Activated CD8-positive, alpha-beta T cell treated with anti-CD3 and anti-CD28 coated beads, Interleukin-2, amount 10 ng/mL, durations not matched to agents 7 days and 5 days (primary cell): ENCODE measurements at regions of chr6 and their contacts with region 1.

Region 1: DNA sequence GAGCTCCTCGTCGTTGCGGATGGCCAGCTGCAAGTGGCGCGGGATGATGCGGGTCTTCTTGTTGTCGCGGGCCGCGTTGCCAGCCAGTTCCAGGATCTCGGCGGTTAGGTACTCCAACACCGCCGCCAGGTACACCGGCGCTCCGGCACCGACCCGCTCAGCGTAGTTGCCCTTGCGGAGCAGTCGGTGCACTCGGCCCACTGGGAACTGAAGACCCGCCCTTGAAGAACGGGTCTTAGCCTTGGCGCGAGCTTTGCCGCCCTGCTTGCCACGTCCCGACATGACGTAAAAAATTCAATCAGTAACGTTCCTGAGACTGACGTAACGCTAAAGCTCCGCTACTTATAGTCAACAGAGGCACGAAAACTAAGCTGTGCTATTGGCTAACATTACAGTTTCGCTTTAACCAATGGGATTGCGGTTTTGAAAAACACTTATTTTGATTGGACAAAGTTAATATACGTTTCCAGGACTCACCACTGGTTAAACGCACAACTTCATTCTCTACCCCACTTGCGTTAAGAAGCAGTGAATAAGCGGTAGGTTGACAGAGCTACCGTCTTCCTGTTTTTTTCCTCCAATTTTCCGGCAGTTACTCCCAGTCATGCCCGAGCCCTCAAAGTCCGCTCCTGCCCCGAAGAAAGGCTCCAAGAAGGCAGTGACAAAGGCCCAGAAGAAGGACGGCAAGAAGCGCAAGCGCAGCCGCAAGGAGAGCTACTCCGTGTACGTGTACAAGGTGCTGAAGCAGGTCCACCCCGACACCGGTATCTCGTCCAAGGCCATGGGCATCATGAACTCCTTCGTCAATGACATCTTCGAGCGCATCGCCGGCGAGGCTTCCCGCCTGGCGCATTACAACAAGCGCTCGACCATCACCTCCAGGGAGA is 73.9 kb downstream of the OR2B2 start:
- DNase-seq: peak; percentile 92
- ATAC-seq: peak; percentile 78
- H3K4me3 Mint-ChIP-seq: no peak overlapping the region
- H3K27ac Mint-ChIP-seq: no peak overlapping the region
- H3K4me1 Mint-ChIP-seq: peaks cover 33% of the 10 kb centered on the region
- H3K27me3 Mint-ChIP-seq: no peaks in the 10 kb centered on the region

Region 2: DNA sequence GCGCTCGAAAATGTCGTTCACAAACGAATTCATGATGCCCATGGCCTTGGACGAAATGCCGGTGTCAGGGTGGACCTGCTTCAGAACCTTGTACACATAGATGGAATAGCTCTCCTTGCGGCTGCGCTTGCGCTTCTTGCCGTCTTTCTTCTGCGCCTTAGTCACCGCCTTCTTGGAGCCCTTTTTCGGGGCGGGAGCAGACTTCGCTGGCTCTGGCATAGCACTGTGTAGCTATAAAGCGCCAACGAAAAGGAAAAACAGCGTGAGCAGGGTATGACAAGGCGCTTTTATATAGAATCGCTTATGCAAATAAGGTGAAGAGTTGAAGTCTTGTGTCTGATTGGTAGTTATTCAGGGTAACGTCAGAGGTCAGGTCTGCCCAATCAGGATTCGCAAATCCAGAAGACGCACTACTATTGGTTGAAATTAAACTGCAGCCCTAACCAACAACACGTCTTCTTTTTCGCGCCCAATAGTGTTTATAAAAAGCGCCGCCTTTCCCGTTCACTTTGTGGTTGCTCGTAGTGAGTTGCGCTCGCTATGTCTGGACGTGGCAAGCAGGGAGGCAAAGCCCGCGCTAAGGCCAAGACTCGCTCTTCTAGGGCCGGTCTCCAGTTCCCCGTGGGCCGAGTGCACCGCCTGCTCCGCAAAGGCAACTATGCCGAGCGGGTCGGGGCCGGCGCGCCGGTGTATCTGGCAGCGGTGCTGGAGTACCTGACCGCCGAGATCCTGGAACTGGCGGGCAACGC is 705.6 kb before region 1 on chr6:
- CTCF ChIA-PET with region 1: no interaction called
- POLR2A ChIA-PET with region 1: interaction called, 96 read pairs
- DNase-seq: peak; percentile 95
- ATAC-seq: peak; percentile 76
- H3K4me3 Mint-ChIP-seq: no peak overlapping the region
- H3K27ac Mint-ChIP-seq: no peak overlapping the region
- H3K4me1 Mint-ChIP-seq: peaks cover 68% of the 10 kb centered on the region
- H3K27me3 Mint-ChIP-seq: no peaks in the 10 kb centered on the region

Region 3: GRCh38 chr6:27138837-27139755 is 699.2 kb before region 1 on chr6:
- CTCF ChIA-PET with region 1: no interaction called
- POLR2A ChIA-PET with region 1: interaction called, 96 read pairs
- DNase-seq: peak; percentile 87
- ATAC-seq: peak; percentile 68
- H3K4me3 Mint-ChIP-seq: peak overlapping the region; percentile 95
- H3K27ac Mint-ChIP-seq: peak overlapping the region; percentile 98
- H3K4me1 Mint-ChIP-seq: peaks cover 71% of the 10 kb centered on the region
- H3K27me3 Mint-ChIP-seq: no peaks in the 10 kb centered on the region

Region 4: GRCh38 chr6:27816906-27817305 is 21.4 kb before region 1 on chr6:
- CTCF ChIA-PET with region 1: interaction called, 19 read pairs
- POLR2A ChIA-PET with region 1: interaction called, 697 read pairs
- DNase-seq: no peak
- ATAC-seq: no peak
- H3K4me3 Mint-ChIP-seq: no peak overlapping the region
- H3K27ac Mint-ChIP-seq: peak overlapping the region; percentile 62
- H3K4me1 Mint-ChIP-seq: peaks cover 50% of the 10 kb centered on the region
- H3K27me3 Mint-ChIP-seq: no peaks in the 10 kb centered on the region

Region 5: DNA sequence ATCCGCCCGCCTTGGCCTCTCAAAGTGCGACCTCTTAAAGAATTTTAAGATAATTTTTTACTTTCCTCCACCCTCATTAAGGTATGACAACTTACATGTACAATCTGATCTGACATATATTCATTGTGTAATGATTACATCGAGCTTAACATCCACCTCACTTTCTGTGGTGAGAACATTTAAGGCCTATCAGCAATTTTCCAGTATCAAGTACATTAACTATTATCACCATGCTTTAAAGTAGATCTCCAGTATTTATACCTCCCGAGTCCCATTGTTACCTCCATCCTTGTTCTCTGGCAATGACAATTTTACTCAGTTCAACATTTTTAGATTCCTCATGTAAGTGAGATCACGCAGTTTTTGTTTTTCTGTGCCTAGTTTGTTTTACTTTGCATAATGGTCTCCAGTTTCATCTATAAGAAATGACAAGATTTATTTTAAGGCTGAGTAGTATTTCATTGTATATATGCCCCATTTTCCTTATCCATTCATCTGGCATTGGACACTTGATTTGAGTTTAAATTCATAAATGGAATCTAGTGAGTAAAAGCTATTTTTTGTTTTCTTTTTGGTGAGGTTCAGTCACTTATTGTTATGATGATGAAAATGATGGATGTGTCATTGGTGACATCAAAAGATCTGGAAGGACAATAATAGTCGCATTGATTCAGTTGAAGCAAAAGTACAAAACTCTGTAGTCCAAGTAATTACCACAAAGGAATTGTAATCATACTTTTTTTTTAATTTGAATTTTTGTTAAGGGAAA is 13.1 kb before region 1 on chr6:
- CTCF ChIA-PET with region 1: interaction called, 19 read pairs
- POLR2A ChIA-PET with region 1: interaction called, 369 read pairs
- DNase-seq: no peak
- ATAC-seq: peak; percentile 3
- H3K4me3 Mint-ChIP-seq: peak overlapping the region; percentile 93
- H3K27ac Mint-ChIP-seq: peak overlapping the region; percentile 99
- H3K4me1 Mint-ChIP-seq: peaks cover 45% of the 10 kb centered on the region
- H3K27me3 Mint-ChIP-seq: no peaks in the 10 kb centered on the region

Region 6: DNA sequence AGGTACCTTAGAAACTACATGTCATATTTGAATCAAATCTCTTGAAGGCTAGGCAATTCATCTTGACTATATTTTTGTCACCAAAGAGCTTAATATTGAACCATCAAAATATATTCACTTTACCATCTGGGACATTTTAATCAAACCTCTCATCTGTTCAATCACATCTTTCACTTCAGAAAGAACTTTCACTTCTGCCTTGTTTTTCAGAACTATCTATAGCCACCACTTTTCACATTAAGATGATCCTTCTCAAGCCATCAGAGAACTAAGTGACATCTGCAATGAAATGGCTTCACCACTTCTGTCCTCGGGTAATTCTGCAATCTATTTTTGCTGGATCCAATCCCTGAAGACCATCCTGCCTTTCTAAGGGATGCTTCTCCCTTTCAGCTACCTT is 16.1 kb after region 1 on chr6:
- CTCF ChIA-PET with region 1: interaction called, 3 read pairs
- POLR2A ChIA-PET with region 1: interaction called, 2,805 read pairs
- DNase-seq: no peak
- ATAC-seq: no peak
- H3K4me3 Mint-ChIP-seq: no peak overlapping the region
- H3K27ac Mint-ChIP-seq: no peak overlapping the region
- H3K4me1 Mint-ChIP-seq: no peaks in the 10 kb centered on the region
- H3K27me3 Mint-ChIP-seq: peaks cover 7% of the 10 kb centered on the region

Region 7: DNA sequence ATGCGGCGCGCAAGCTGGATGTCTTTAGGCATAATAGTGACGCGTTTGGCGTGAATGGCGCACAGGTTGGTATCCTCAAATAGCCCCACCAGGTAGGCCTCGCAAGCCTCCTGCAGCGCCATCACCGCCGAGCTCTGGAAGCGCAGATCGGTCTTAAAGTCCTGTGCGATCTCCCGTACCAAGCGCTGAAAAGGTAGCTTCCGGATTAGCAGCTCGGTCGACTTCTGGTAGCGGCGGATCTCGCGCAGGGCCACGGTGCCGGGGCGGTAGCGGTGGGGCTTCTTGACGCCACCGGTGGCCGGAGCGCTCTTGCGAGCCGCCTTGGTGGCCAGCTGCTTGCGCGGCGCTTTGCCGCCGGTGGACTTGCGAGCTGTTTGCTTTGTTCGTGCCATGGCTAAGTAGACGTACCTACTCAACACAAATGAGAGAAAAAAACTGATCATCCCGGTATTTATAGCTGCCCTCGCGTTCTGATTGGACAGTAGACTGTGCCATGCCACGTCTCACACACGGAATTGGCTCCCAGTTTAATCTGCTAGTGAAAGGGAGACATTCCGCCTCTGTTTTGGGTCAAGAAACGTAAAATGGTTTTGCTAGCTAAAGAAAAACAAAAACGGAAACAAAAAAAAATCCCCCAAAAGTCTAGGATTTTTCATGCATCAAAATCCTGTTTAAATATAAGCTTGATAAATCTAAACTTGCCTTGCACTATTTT is 33.8 kb after region 1 on chr6:
- CTCF ChIA-PET with region 1: interaction called, 72 read pairs
- POLR2A ChIA-PET with region 1: interaction called, 2,805 read pairs
- DNase-seq: peak; percentile 92
- ATAC-seq: peak; percentile 62
- H3K4me3 Mint-ChIP-seq: peak overlapping the region; percentile 85
- H3K27ac Mint-ChIP-seq: peak overlapping the region; percentile 99
- H3K4me1 Mint-ChIP-seq: peaks cover 64% of the 10 kb centered on the region
- H3K27me3 Mint-ChIP-seq: no peaks in the 10 kb centered on the region

Region 8: DNA sequence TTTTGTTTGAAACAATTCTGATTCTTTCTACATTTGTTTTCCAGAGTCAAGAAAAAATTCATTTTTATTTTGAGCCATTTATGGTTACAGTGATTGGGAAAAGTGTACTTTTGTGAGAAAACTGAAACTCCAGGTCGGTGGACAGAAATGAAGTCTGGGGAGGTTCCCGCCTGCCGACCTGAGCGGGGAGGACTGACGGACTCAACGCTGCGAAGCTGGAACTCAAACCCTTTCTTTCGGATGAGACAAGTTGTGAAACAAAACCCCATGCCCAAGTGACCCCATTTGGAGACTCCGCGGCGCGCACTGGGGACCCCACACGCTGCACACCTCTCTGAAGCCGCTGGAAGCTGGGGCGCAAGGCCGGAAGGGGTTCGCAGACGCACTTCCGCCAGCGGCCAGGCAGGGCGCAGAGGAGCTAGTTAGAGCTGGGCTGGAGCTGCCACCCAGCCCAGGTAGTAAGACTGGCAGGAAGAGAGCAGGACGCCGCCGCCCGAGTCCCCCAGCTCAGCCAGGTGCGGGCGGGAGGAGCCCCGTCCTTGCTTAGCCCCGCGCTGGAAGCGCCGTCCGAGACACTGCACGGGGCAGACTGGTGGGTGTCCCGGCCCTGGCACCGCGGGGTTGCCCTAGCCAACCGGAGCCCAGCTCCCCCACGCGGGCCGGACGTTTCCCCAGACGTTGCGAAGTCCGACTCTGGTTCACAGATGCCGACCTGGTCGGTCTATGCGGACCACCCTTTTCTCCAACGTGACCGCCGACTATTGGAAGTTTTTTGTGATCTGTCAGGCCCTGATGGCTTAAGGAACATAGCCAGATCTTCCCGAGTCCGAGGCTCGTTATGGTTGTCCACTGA is 266.3 kb after region 1 on chr6:
- CTCF ChIA-PET with region 1: no interaction called
- POLR2A ChIA-PET with region 1: no interaction called
- DNase-seq: peak; percentile 89
- ATAC-seq: peak; percentile 100
- H3K4me3 Mint-ChIP-seq: peak overlapping the region; percentile 82
- H3K27ac Mint-ChIP-seq: peak overlapping the region; percentile 86
- H3K4me1 Mint-ChIP-seq: peaks cover 14% of the 10 kb centered on the region
- H3K27me3 Mint-ChIP-seq: peaks cover 30% of the 10 kb centered on the region